A673 (cell line): ENCODE measurements at regions of chr1 and their contacts with region 1.

Region 1: GRCh38 chr1:32733582-32734321 is 31.2 kb upstream of the SYNC start:
- DNase-seq: no peak
- H3K4me3 ChIP-seq: no peak overlapping the region
- H3K27ac ChIP-seq: no peak overlapping the region
- H3K4me1 ChIP-seq: no peaks in the 10 kb centered on the region
- H3K27me3 ChIP-seq: no peaks in the 10 kb centered on the region
- CTCF ChIP-seq: no peak

Region 2: DNA sequence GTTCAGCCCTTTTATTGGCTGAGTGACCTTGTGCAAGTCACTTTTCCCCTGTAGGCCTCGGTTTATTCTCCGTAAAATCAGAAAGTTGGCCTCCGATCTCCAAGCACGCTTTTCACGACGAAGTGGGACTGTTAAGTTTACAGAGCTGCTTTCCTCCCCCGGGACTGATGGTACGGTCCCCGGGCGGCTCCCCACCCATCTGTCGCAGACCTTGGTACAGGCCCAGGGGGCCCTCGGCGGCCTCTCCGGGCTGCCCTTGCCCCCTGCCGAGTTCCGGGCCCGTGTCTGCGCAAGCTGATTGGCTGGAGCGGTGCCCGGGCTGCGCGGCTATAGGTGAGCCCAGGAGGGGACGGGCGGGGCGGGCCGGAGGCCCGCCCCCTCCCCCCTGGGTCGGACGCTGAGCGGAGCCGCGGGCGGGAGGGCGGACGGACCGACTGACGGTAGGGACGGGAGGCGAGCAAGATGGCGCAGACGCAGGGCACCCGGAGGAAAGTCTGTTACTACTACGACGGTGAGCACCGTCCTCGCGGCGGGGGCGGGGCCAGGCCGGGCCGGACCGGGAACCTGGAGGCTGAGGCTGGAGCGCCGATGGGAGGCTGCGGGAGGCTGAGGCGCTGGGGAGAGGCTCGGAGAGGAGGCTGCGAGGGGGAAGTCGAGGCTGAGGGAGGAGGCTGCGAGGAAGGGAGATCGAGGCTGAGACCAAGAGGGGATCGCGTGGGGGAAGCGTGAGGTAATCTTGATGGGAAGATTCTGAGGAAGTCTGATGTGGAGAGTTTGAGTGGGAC is 441.9 kb before region 1 on chr1 and contains the start of gene HDAC1:
- CTCF ChIA-PET with region 1: no interaction called
- POLR2A ChIA-PET with region 1: no interaction called
- intact Hi-C with region 1: no loop called
- DNase-seq: peak; percentile 98
- H3K4me3 ChIP-seq: peak within 1 kb of the TSS; percentile 98
- H3K27ac ChIP-seq: peak within 1 kb of the TSS; percentile 90
- H3K4me1 ChIP-seq: peaks cover 22% of the 10 kb centered on the region
- H3K27me3 ChIP-seq: no peaks in the 10 kb centered on the region
- CTCF ChIP-seq: no peak
- total RNA-seq, gene HDAC1: 192 and 195 TPM in 2 replicates

Region 3: GRCh38 chr1:32703479-32704291 is 30.1 kb before region 1 on chr1:
- CTCF ChIA-PET with region 1: no interaction called
- POLR2A ChIA-PET with region 1: interaction called, 13 read pairs
- intact Hi-C with region 1: no loop called
- DNase-seq: no peak
- H3K4me3 ChIP-seq: peak overlapping the region; percentile 55
- H3K27ac ChIP-seq: no peak overlapping the region
- H3K4me1 ChIP-seq: no peaks in the 10 kb centered on the region
- H3K27me3 ChIP-seq: no peaks in the 10 kb centered on the region
- CTCF ChIP-seq: no peak

Region 4: DNA sequence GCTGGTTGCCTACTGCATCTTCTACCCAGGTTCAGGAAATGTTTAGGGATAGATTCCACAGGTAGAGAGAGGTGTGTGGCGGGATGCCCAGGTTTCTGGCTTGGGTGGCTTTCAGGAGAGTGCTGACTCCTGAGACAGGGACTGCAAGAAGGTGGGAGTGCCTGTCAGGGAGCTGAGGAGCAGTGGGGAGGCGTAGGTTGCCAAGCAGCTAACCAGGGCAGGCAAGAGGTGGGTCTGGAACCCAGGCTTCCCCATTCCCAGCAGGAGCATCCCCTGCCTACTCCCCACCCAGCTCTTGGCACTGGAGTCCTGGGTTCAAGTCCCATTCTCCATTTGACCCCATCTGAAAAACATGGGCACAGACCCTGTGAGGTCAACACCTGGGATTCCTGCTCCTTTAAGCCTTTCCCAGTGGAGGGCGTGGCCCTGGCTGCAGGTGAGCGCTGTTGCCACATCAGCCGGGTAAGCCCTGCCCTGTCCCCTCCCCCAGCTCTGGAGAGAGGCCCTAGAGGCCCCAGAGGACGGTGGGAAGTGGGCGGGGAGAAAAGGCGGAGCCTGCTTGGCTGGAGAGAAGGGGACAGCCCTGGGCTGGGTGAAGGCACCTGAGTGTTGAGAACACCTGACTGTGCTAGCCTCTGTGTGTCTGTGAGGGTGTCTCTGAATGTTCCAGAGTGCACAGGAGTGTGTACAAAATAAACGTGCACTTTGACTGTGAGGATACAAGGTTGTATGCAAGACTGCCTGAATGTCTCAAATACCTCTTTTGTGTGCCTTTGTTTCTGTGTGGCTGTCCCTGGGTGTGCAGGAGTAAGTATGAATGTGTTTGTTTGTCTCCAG is 17.2 kb before region 1 on chr1:
- CTCF ChIA-PET with region 1: no interaction called
- POLR2A ChIA-PET with region 1: no interaction called
- intact Hi-C with region 1: no loop called
- DNase-seq: peak; percentile 58
- H3K4me3 ChIP-seq: no peak overlapping the region
- H3K27ac ChIP-seq: no peak overlapping the region
- H3K4me1 ChIP-seq: peaks cover 6% of the 10 kb centered on the region
- H3K27me3 ChIP-seq: no peaks in the 10 kb centered on the region
- CTCF ChIP-seq: no peak

Region 5: GRCh38 chr1:32753532-32754312 is 20.0 kb after region 1 on chr1:
- CTCF ChIA-PET with region 1: no interaction called
- POLR2A ChIA-PET with region 1: interaction called, 15 read pairs
- intact Hi-C with region 1: no loop called
- DNase-seq: peak; percentile 83
- H3K4me3 ChIP-seq: peak overlapping the region; percentile 59
- H3K27ac ChIP-seq: no peak overlapping the region
- H3K4me1 ChIP-seq: peaks cover 4% of the 10 kb centered on the region
- H3K27me3 ChIP-seq: no peaks in the 10 kb centered on the region
- CTCF ChIP-seq: no peak